ENCODE measurements at regions of chr6 and their contacts with region 1.

Region 1: GRCh38 chr6:129264480-129265045 is 381.6 kb downstream of the LAMA2 start:
- DNase-seq: no peak
- ATAC-seq: no peak
- H3K4me3 ChIP-seq: no peak overlapping the region
- H3K4me3 Mint-ChIP-seq: no peak overlapping the region
- H3K27ac ChIP-seq: no peak overlapping the region
- H3K27ac Mint-ChIP-seq: no peak overlapping the region
- H3K4me1 ChIP-seq: no peaks in the 10 kb centered on the region
- H3K4me1 Mint-ChIP-seq: no peaks in the 10 kb centered on the region
- H3K27me3 ChIP-seq: peaks cover 0 to 3% of the 10 kb centered on the region in 2 experiments
- H3K27me3 Mint-ChIP-seq: no peaks in the 10 kb centered on the region

Region 2: GRCh38 chr6:129186988-129187387 is 77.6 kb before region 1 on chr6:
- CTCF ChIA-PET with region 1: no interaction called
- POLR2A ChIA-PET with region 1: no interaction called
- DNase-seq: no peak
- ATAC-seq: no peak
- H3K4me3 ChIP-seq: no peak overlapping the region
- H3K4me3 Mint-ChIP-seq: no peak overlapping the region
- H3K27ac ChIP-seq: no peak overlapping the region
- H3K27ac Mint-ChIP-seq: no peak overlapping the region
- H3K4me1 ChIP-seq: no peaks in the 10 kb centered on the region
- H3K4me1 Mint-ChIP-seq: no peaks in the 10 kb centered on the region
- H3K27me3 ChIP-seq: no peaks in the 10 kb centered on the region
- H3K27me3 Mint-ChIP-seq: peaks cover 5% of the 10 kb centered on the region in 2 donors

Region 3: GRCh38 chr6:129251669-129252376 is 12.7 kb before region 1 on chr6:
- CTCF ChIA-PET with region 1: interaction called, 7 to 16 read pairs
- POLR2A ChIA-PET with region 1: no interaction called
- DNase-seq: peak in 25 of 35 experiments; percentile 3 to 70 (median 17)
- ATAC-seq: peak in 2 of 4 experiments; percentile 39 to 40
- H3K4me3 ChIP-seq: no peak overlapping the region
- H3K4me3 Mint-ChIP-seq: no peak overlapping the region
- H3K27ac ChIP-seq: no peak overlapping the region
- H3K27ac Mint-ChIP-seq: no peak overlapping the region
- H3K4me1 ChIP-seq: no peaks in the 10 kb centered on the region
- H3K4me1 Mint-ChIP-seq: peaks cover 0 to 7% (median 3%) of the 10 kb centered on the region in 3 donors
- H3K27me3 ChIP-seq: peaks cover 0 to 3% of the 10 kb centered on the region in 2 experiments
- H3K27me3 Mint-ChIP-seq: peaks cover 20 to 33% of the 10 kb centered on the region in 2 donors

Region 4: DNA sequence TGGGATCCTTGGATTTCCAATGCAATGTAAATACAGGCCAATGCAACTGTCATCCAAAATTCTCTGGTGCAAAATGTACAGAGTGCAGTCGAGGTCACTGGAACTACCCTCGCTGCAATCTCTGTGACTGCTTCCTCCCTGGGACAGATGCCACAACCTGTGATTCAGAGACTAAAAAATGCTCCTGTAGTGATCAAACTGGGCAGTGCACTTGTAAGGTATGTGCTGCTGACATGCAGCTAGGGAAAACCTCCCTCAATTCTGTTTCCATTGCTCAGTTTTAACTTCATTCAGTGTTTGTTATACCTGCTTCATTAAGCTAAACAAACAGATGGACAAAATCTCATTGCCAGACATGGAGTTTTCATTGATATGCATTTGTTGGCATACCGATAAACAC is 48.3 kb after region 1 on chr6:
- CTCF ChIA-PET with region 1: no interaction called
- POLR2A ChIA-PET with region 1: no interaction called
- DNase-seq: no peak
- ATAC-seq: no peak
- H3K4me3 ChIP-seq: no peak overlapping the region
- H3K4me3 Mint-ChIP-seq: no peak overlapping the region
- H3K27ac ChIP-seq: no peak overlapping the region
- H3K27ac Mint-ChIP-seq: no peak overlapping the region
- H3K4me1 ChIP-seq: no peaks in the 10 kb centered on the region
- H3K4me1 Mint-ChIP-seq: no peaks in the 10 kb centered on the region
- H3K27me3 ChIP-seq: peaks cover 0 to 2% of the 10 kb centered on the region in 2 experiments
- H3K27me3 Mint-ChIP-seq: peaks cover 0 to 27% of the 10 kb centered on the region in 2 donors

Region 5: GRCh38 chr6:129359811-129360681 is 95.5 kb after region 1 on chr6:
- CTCF ChIA-PET with region 1: no interaction called
- POLR2A ChIA-PET with region 1: no interaction called
- DNase-seq: no peak
- ATAC-seq: no peak
- H3K4me3 ChIP-seq: no peak overlapping the region
- H3K4me3 Mint-ChIP-seq: no peak overlapping the region
- H3K27ac ChIP-seq: no peak overlapping the region
- H3K27ac Mint-ChIP-seq: no peak overlapping the region
- H3K4me1 ChIP-seq: no peaks in the 10 kb centered on the region
- H3K4me1 Mint-ChIP-seq: no peaks in the 10 kb centered on the region
- H3K27me3 ChIP-seq: no peaks in the 10 kb centered on the region
- H3K27me3 Mint-ChIP-seq: peaks cover 0 to 6% of the 10 kb centered on the region in 2 donors